ENCODE measurements at regions of chr17 and their contacts with region 1.

Region 1: DNA sequence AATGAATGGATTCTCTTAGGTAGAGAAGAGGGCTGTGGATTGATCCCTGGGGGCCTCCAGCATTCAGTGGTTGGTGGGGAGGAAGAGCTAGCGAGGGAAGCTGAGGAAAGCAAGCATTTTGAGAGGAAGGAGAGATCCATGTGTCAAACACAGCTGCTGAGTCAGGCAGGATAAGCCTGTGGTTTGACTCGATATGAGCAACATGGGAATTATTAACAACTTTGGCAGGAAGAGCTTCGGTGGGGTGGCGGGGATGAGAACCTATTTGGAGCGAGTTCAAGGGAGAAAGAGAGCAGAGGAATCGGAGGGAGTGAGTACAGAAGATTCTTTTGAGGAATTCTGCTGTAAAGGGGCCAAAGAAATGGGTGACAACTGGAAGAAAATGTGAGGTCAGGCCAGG is 59.5 kb upstream of the CDC42EP4 start:
- DNase-seq: no peak
- ATAC-seq: no peak
- H3K4me3 Mint-ChIP-seq: no peak overlapping the region
- H3K27ac Mint-ChIP-seq: no peak overlapping the region
- H3K4me1 Mint-ChIP-seq: no peaks in the 10 kb centered on the region
- H3K27me3 Mint-ChIP-seq: peaks cover 21% of the 10 kb centered on the region

Region 2: GRCh38 chr17:73192894-73193701 is 178.2 kb before region 1 on chr17 and contains the start of gene COG1:
- CTCF ChIA-PET with region 1: interaction called, 20 read pairs
- DNase-seq: peak; percentile 91
- ATAC-seq: peak; percentile 84
- H3K4me3 Mint-ChIP-seq: peak within 1 kb of the TSS; percentile 92
- H3K27ac Mint-ChIP-seq: peak within 1 kb of the TSS; percentile 97
- H3K4me1 Mint-ChIP-seq: peaks cover 23% of the 10 kb centered on the region
- H3K27me3 Mint-ChIP-seq: no peaks in the 10 kb centered on the region
- total RNA-seq, gene COG1: 26.6 to 33.9 TPM

Region 3: GRCh38 chr17:73247726-73248125 is 123.6 kb before region 1 on chr17:
- CTCF ChIA-PET with region 1: interaction called, 12 read pairs
- DNase-seq: no peak
- ATAC-seq: no peak
- H3K4me3 Mint-ChIP-seq: no peak overlapping the region
- H3K27ac Mint-ChIP-seq: no peak overlapping the region
- H3K4me1 Mint-ChIP-seq: no peaks in the 10 kb centered on the region
- H3K27me3 Mint-ChIP-seq: no peaks in the 10 kb centered on the region

Region 4: GRCh38 chr17:73261952-73262675 is 109.2 kb before region 1 on chr17:
- CTCF ChIA-PET with region 1: interaction called, 16 read pairs
- DNase-seq: no peak
- ATAC-seq: no peak
- H3K4me3 Mint-ChIP-seq: no peak overlapping the region
- H3K27ac Mint-ChIP-seq: no peak overlapping the region
- H3K4me1 Mint-ChIP-seq: no peaks in the 10 kb centered on the region
- H3K27me3 Mint-ChIP-seq: no peaks in the 10 kb centered on the region

Region 5: DNA sequence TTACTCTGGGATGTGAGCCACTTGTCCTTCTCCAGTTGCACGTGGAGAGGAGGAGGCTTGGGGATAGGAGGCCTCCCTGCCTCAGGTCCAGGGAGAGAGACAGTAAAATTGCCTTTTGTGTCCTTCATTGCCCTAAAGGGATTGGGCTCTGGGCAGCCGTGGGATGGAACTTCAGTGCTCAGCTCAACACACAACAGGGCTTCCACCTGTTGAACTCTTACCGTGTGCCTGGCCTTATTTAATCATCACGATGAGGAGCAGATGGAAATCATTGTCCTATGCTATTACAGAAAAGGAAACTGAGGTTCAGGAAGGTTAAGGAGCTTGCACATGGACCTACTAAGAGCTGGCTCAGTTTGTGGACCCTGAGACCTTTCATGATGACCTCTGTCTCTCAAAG is 33.0 kb after region 1 on chr17:
- CTCF ChIA-PET with region 1: no interaction called
- DNase-seq: no peak
- ATAC-seq: no peak
- H3K4me3 Mint-ChIP-seq: no peak overlapping the region
- H3K27ac Mint-ChIP-seq: no peak overlapping the region
- H3K4me1 Mint-ChIP-seq: no peaks in the 10 kb centered on the region
- H3K27me3 Mint-ChIP-seq: no peaks in the 10 kb centered on the region

Measured in activated CD8-positive, alpha-beta memory T cell treated with anti-CD3 and anti-CD28 coated beads, Interleukin-2, amount 10 ng/mL, durations not matched to agents 7 days and 5 days (primary cell).